ENCODE measurements at regions of chr5 and their contacts with region 1.

Region 1: GRCh38 chr5:16666883-16667398 is 50.1 kb upstream of the RETREG1 start:
- DNase-seq: peak in 1 of 5 donors; percentile 28
- H3K4me3 ChIP-seq: no peak overlapping the region
- H3K4me3 Mint-ChIP-seq: peak overlapping the region in 1 of 7 donors; percentile 47
- H3K27ac ChIP-seq: no peak overlapping the region
- H3K27ac Mint-ChIP-seq: no peak overlapping the region
- H3K4me1 ChIP-seq: no peaks in the 10 kb centered on the region
- H3K4me1 Mint-ChIP-seq: no peaks in the 10 kb centered on the region
- H3K27me3 ChIP-seq: no peaks in the 10 kb centered on the region
- H3K27me3 Mint-ChIP-seq: peaks cover 2 to 3% of the 10 kb centered on the region in 2 donors

Region 2: DNA sequence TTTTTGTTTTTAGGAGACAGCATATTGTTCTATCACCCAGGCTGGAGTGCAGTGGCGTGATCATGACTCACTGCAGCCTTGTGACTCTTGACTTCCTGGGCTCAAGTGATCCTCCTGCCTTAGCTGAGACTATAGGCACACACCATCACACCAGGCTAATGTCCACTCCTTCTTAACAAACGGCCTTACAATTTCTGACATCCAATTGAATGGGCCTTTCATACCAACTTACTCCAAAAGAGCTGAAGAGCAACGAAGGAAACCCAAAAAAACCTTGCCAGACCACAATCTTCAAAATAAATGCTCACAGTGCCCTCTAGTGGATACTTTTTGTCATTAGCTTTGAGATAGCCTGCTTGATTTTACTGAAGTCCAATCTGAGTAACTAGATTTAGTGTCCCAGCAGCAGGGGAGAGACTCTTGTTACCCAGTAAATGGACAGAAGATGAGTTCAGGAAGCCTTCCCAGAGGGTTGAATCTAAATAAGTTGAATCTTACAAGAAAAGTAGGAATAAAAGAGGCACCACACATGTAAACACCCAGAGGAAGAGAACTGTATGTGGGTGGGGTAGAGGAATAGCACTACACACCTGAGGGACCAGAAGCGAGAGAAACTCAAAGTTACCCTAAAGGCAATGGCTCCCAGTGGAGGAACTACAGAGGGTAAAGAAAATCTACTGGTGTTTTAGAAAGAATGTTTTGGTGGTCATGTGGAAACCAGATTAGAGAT is 210.7 kb before region 1 on chr5:
- CTCF ChIA-PET with region 1: interaction called, 13 read pairs
- POLR2A ChIA-PET with region 1: no interaction called
- DNase-seq: peak; percentile 4 to 59 (median 48)
- H3K4me3 ChIP-seq: no peak overlapping the region
- H3K4me3 Mint-ChIP-seq: peak overlapping the region; percentile 8 to 72 (median 64)
- H3K27ac ChIP-seq: no peak overlapping the region
- H3K27ac Mint-ChIP-seq: peak overlapping the region; percentile 63 to 94 (median 78)
- H3K4me1 ChIP-seq: peaks cover 53% of the 10 kb centered on the region
- H3K4me1 Mint-ChIP-seq: peaks cover 52 to 86% (median 82%) of the 10 kb centered on the region in 3 donors
- H3K27me3 ChIP-seq: no peaks in the 10 kb centered on the region
- H3K27me3 Mint-ChIP-seq: no peaks in the 10 kb centered on the region

Region 3: DNA sequence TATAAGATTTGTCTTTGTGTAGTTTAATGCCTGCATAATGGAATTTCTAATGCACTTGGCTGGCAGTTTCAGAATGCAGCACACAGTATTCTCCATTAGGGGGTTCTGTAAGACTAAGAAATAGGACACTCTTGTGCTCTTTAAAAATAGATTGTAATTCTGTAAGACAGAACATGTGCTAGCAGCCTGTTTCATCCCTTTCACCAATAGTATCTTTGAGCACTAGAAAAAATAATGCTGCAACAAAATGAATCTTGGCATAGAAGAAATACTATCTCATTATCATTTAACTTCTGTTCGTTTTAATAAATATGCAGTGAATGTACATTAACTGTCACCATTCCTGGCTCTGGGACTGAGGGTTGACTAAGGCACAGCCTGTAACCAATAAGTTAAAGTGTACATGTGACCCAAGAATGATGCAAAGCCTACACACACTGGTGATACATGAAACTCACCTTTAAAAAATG is 177.6 kb before region 1 on chr5:
- CTCF ChIA-PET with region 1: interaction called, 10 read pairs
- POLR2A ChIA-PET with region 1: no interaction called
- DNase-seq: peak in 1 of 5 donors; percentile 18
- H3K4me3 ChIP-seq: no peak overlapping the region
- H3K4me3 Mint-ChIP-seq: no peak overlapping the region
- H3K27ac ChIP-seq: no peak overlapping the region
- H3K27ac Mint-ChIP-seq: peak overlapping the region in 2 of 8 donors; percentile 8 to 52
- H3K4me1 ChIP-seq: no peaks in the 10 kb centered on the region
- H3K4me1 Mint-ChIP-seq: peaks cover 5 to 33% (median 5%) of the 10 kb centered on the region in 3 donors
- H3K27me3 ChIP-seq: no peaks in the 10 kb centered on the region
- H3K27me3 Mint-ChIP-seq: peaks cover 0 to 1% of the 10 kb centered on the region in 2 donors

Region 4: GRCh38 chr5:16616536-16617273 is 50.2 kb before region 1 on chr5 and contains the start of gene RETREG1:
- CTCF ChIA-PET with region 1: interaction called, 10 read pairs
- POLR2A ChIA-PET with region 1: no interaction called
- DNase-seq: peak; percentile 65 to 93 (median 85)
- H3K4me3 ChIP-seq: peak within 1 kb of the TSS; percentile 66
- H3K4me3 Mint-ChIP-seq: peak within 1 kb of the TSS in 6 of 7 donors; percentile 90 to 96 (median 94)
- H3K27ac ChIP-seq: peak within 1 kb of the TSS; percentile 82
- H3K27ac Mint-ChIP-seq: peak within 1 kb of the TSS; percentile 87 to 98 (median 95)
- H3K4me1 ChIP-seq: peaks cover 35% of the 10 kb centered on the region
- H3K4me1 Mint-ChIP-seq: peaks cover 36 to 40% (median 38%) of the 10 kb centered on the region in 3 donors
- H3K27me3 ChIP-seq: no peaks in the 10 kb centered on the region
- H3K27me3 Mint-ChIP-seq: no peaks in the 10 kb centered on the region
- total RNA-seq, gene RETREG1: 11.4 to 12.1 TPM